ENCODE measurements at regions of chr5 and their contacts with region 1.

Region 1: DNA sequence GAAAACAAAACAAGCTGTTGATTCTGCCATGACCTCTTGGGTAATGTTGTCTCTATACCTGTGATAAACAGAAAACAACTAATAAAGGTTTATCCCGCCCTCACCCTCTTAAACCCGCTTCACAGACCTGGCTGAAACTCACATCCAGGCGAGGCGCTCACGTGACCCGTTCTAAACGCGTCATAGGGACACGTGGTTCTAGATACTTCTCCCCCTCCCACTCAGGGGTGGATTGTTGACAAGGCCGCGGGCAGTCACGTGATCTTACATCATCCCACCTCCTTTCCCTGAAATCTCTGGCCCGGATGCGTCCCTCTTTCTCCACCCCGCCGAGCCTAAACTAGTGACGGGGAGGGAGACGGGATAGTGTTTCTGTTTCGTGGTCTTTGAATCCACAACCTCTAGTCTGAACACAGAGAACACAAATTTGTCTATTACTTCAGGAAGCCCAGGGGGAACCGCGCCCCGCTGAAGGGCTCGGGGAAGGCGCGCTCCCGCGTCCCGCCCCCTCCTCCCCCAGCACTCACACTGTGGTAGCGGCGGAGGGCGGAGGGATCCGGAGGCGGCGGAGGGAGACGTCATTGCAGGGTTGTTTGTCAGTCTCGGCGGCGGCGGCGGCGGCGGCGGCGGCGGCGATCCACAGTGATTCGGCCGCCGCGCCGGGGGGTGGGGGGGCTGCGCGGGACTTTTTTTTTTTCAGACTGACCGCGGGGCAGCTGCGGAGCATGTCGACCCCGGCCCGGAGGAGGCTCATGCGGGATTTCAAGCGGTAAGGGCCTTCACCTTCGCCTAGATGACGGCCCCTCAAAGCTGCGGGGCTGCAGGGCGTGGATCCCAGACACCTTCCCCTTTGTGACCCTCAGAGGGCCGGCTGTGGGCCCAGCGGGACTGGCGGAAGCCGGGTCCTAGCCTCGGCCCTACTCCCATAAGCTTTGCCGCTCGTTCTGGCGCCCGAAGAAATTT is at the start of gene UBE2B:
- DNase-seq: peak; percentile 97
- ATAC-seq: peak; percentile 75
- H3K4me3 Mint-ChIP-seq: peak within 1 kb of the TSS; percentile 91
- H3K27ac Mint-ChIP-seq: peak within 1 kb of the TSS; percentile 99
- H3K4me1 Mint-ChIP-seq: peaks cover 34% of the 10 kb centered on the region
- H3K27me3 Mint-ChIP-seq: no peaks in the 10 kb centered on the region
- total RNA-seq, gene UBE2B: 98.5 to 101 TPM

Region 2: GRCh38 chr5:134225618-134226440 is 145.3 kb before region 1 on chr5 and contains the start of gene PPP2CA:
- POLR2A ChIA-PET with region 1: interaction called, 21 read pairs
- DNase-seq: peak; percentile 99
- ATAC-seq: peak; percentile 88
- H3K4me3 Mint-ChIP-seq: peak within 1 kb of the TSS; percentile 67
- H3K27ac Mint-ChIP-seq: peak within 1 kb of the TSS; percentile 98
- H3K4me1 Mint-ChIP-seq: peaks cover 35% of the 10 kb centered on the region
- H3K27me3 Mint-ChIP-seq: no peaks in the 10 kb centered on the region
- total RNA-seq, gene PPP2CA: 122 to 129 TPM

Region 3: GRCh38 chr5:134411546-134412266 is 40.6 kb after region 1 on chr5 and contains the start of gene CDKN2AIPNL:
- POLR2A ChIA-PET with region 1: interaction called, 18 read pairs
- DNase-seq: peak; percentile 92
- ATAC-seq: peak; percentile 100
- H3K4me3 Mint-ChIP-seq: peak within 1 kb of the TSS; percentile 93
- H3K27ac Mint-ChIP-seq: peak within 1 kb of the TSS; percentile 88
- H3K4me1 Mint-ChIP-seq: peaks cover 26% of the 10 kb centered on the region
- H3K27me3 Mint-ChIP-seq: no peaks in the 10 kb centered on the region
- total RNA-seq, gene CDKN2AIPNL: 22.3 to 23.4 TPM